Cardiac septum (tissue), 1 donor: ENCODE measurements at regions of chr15 and their contacts with region 1.

Region 1: DNA sequence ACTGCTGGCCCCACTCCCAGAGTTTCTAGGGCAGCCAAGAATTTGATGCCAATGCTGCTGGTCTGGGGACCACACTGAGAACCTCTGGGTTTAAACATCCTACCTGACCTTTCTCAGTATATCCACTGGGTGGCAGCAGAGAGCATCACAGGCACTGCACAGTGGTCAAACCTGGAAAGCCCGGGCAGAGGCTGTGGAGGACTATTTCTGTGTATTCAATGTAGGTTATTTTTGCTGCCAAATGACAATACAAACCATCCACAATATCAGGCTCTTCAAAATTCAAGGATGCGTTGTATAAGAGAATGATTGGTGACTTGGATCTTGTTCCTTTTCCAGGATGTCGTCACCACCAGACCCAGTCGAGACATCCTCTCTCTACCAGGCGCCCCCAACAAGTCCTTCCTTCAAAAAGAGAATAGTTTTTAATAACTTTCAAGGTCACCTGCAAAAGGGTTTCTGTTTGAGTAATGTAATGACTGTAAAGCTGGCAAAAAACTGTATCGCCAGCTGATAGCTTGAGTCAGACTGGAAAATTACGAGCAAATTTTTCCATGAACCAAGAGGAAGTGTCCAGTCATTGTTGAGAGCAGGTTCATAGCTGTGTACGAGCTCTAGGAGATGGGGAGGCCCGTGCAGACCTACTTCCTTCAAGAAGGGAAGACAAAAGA is 30.5 kb upstream of the MYZAP start:
- DNase-seq: peak; percentile 84

Region 2: DNA sequence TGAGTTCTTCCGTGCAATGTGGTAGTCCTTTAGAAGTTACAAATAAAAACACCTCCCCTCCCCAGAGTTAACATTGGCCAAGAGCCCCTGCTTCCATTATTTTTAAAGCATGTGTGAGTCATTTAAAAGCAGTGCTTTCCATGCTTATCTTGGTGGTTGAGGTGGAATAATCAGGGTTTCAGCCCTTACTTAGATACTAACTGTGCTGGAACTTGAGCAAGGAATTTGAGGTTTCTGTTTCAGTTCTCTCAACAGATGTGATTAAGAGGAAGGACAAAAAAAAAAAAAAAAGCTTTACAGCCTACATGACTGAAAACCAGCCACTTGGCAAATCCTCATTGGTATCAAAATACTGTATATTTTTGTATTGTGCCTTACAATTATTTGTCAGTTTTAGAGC is 120.4 kb before region 1 on chr15:
- intact Hi-C with region 1: no loop called
- DNase-seq: no peak

Region 3: GRCh38 chr15:57505949-57506391 is 55.2 kb before region 1 on chr15:
- intact Hi-C with region 1: no loop called
- DNase-seq: no peak

Region 4: DNA sequence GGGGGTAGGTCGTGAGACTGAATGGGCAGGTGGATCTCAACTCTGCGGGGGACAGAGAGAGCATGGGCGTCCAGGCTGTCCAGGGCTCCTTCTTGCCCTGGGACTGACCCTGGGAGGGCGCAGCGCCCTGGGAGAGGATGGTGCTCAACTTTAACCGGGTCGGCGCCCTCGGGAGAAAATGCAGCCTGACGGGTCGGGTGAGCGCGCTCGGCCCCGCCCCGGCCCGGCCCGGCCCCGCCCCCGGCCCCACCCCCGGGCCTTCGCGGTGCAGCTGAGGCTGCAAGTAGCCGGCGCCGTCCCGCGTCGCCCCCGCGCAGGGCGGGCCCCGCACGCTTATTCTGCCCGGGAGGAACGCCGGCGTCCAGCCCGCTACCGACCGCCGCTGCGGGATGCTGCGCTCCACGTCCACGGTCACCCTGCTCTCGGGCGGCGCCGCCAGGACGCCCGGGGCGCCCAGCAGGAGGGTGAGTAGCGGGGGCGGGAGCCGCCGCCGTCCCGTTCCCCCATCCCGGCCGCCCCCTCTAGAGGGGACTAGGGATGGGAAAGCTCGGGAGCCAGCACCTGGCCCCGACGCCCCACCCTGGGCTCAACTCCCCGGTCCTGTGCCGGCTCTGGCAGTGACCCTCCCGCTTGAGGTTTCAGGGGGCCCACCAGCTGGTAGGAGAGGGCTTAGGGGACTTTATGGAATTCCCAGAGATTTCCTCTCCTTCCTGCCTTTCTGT is 30.6 kb after region 1 on chr15 and contains the start of gene MYZAP:
- intact Hi-C with region 1: loop called (anchors 2 kb)
- DNase-seq: peak; percentile 81
- total RNA-seq, gene MYZAP: 658 TPM

Region 5: DNA sequence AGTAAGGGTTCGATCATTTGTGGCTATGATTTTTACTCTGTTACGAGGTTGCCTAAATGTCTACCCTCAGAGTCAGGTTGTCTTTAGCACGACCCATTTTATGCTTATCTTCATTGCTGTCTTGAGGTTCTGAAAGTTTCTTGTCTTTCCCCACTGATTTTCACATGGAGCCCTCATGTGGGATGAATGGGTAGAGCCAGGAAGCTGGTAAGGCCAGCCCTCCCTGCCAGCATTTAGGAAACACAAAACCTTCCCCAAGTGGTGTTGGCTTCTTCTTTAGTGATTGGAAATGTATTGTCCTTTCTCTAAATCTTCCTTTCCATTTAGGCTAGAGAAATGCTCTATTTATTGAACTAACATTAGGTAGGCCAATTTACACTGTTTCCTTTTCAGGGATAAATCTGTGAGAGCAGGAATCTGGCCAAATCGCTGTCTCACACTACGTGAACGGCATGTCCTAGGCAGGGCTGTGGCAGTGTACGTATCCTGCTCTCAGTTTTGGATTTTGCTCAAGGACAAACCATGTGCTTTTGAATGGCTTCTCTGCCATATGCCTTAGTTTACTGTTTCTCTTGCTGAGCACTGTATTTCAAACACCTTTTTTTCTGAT is 74.2 kb after region 1 on chr15:
- intact Hi-C with region 1: loop called (anchors 5 kb)
- DNase-seq: no peak

Region 6: GRCh38 chr15:57732526-57733331 is 171.6 kb after region 1 on chr15:
- intact Hi-C with region 1: loop called (anchors 5 kb)
- DNase-seq: no peak

Region 7: DNA sequence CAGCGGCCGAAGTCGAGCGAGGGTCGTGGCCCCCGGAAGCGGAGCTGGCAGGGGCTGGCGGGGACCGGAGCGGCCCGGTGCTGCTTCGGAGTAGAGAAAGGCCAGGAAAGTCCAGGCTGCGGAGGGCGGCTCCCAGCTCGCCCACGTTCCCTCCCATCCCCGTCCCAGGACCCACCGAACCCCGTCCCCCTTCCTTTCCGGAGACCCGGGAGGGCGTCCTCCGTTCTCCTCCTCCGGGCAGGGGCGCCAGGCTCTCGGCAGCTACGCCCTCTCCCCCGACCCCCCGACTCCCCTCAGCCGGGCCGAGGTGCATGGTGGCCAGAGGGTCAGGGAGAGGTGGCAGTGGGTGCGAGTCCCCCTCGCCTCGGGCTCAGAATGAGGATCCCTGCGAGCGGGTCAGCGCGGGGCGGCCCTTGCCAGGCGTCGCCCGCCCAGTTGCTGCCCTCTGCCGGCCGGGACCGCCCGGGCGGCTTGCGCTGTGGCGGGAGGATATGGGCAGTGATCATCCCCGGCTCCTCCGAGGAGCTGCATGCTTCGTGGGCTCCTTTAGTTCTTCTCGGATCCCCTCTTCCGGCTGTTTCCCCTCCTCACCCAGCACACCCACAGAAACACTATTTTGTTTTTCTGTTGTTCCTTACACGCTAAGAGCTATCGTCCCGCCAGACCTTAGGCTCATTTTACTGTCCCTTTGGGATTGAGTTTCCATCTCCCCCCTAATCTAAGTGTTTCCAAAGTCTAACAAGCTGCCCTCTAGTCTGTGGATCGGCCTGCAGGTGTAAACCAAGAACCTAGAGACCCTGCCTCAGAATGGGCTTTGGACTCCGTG is 505.1 kb after region 1 on chr15:
- intact Hi-C with region 1: loop called (anchors 2 kb)
- DNase-seq: peak; percentile 87